PC-3 (cell line): ENCODE measurements at regions of chr12 and their contacts with region 1.

Region 1: GRCh38 chr12:112837629-112838197 is 46.2 kb downstream of the RPH3A start:
- DNase-seq: peak; percentile 91
- ATAC-seq: peak; percentile 23
- H3K4me3 ChIP-seq: no peak overlapping the region
- H3K27ac ChIP-seq: peak overlapping the region; percentile 97
- H3K4me1 ChIP-seq: peaks cover 50% of the 10 kb centered on the region
- H3K27me3 ChIP-seq: no peaks in the 10 kb centered on the region
- CTCF ChIP-seq: no peak

Region 2: GRCh38 chr12:112855375-112855774 is 17.7 kb after region 1 on chr12:
- CTCF ChIA-PET with region 1: no interaction called
- POLR2A ChIA-PET with region 1: interaction called, 15 read pairs
- intact Hi-C with region 1: loop called (anchors 2 kb)
- DNase-seq: peak; percentile 45
- ATAC-seq: peak; percentile 63; the same call in 1 of the 2 replicates
- H3K4me3 ChIP-seq: no peak overlapping the region
- H3K27ac ChIP-seq: no peak overlapping the region
- H3K4me1 ChIP-seq: peaks cover 7% of the 10 kb centered on the region
- H3K27me3 ChIP-seq: peaks cover 6% of the 10 kb centered on the region; the same call in 1 of the 2 replicates
- CTCF ChIP-seq: peak; percentile 67

Region 3: DNA sequence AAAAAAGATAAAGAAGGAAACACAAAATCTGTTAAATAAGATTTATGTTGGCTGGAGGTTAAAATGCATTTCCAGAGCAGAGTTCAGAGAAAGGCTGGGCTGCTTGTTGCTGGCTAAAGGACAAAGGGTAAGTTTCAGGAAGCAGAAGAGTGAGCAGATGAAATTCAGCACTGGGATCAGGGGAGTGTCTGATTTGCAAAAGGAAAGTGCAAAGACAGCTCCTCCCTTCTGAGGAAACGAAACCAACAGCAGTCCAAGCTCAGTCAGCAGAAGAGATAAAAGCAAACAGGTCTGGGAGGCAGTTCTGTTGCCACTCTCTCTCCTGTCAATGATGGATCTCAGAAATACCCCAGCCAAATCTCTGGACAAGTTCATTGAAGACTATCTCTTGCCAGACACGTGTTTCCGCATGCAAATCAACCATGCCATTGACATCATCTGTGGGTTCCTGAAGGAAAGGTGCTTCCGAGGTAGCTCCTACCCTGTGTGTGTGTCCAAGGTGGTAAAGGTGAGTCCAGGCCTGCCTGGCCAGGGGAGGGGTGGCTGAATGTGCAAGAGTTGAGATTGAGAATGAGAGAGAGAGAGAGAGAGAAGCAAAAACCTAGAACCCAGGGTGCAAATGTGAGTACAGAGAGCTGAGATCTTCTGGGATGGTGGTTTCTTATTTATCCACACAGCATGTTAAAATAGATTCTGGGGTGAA is 69.2 kb after region 1 on chr12 and contains the start of gene OAS1:
- CTCF ChIA-PET with region 1: interaction called, 3 read pairs
- POLR2A ChIA-PET with region 1: no interaction called
- intact Hi-C with region 1: loop called (anchors 1 kb)
- DNase-seq: peak; percentile 70
- ATAC-seq: peak; percentile 76
- H3K4me3 ChIP-seq: peak within 1 kb of the TSS; percentile 63
- H3K27ac ChIP-seq: peak within 1 kb of the TSS; percentile 58
- H3K4me1 ChIP-seq: peaks cover 49% of the 10 kb centered on the region
- H3K27me3 ChIP-seq: no peaks in the 10 kb centered on the region
- CTCF ChIP-seq: no peak
- total RNA-seq, gene OAS1: 10.1 and 10.2 TPM in 2 replicates

Region 4: DNA sequence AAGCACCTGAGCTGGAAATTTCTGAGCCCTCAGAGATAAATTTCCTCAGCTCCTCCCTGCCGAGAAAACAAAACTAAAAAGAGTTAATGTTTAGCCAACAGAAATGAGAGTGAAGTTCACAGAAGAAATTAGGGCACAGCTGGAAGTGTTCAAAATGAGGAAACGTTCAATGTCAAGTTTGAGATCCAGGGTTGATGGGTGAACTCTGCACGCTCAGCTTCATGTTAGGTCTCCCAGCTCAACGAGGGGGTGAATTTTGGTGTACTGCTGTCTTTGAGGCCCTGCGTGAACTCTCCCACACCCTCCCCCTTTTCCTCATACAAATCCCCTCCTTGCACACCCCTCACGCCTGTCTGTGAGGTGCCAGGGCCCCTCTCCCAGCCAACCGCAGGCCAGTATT is 87.3 kb after region 1 on chr12:
- CTCF ChIA-PET with region 1: no interaction called
- POLR2A ChIA-PET with region 1: no interaction called
- intact Hi-C with region 1: no loop called
- DNase-seq: no peak
- ATAC-seq: no peak
- H3K4me3 ChIP-seq: no peak overlapping the region
- H3K27ac ChIP-seq: no peak overlapping the region
- H3K4me1 ChIP-seq: no peaks in the 10 kb centered on the region
- H3K27me3 ChIP-seq: no peaks in the 10 kb centered on the region
- CTCF ChIP-seq: no peak